ENCODE measurements at regions of chr19 and their contacts with region 1.

Region 1: DNA sequence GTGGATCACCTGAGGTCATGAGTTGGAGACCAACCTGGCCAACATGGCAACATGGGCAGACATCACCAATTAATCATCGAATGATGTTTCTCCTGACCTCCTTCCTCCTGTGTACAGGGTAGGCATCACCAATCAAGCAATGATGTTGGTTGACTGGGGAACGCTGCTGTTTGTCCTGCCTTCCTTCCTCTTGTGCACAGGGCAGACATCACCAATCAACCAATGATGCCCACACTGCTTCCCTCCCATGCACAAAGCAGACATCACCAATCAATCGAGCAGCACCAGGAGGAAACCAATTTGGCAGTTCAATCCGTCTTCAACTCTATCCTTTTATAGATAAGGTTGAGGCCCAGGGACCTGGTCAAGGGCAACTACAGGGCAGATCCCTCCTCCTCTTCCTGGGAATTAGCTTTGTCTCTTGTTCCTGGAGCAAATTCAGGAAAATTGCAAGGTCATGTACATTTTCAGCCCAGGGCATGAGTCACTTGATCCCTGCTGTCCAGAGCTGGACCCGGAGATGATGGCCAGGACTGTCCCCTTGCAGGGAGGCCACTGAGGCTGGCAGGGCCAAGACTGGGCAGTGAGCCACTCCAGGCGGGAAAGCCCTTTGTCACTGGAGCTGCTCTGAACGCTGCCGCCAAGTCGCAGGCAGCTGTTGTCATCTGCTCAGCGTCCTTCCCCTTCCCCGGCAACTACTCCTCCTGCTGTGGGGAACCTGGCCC is 5.3 kb upstream of the CSNK1G2 start:
- DNase-seq: peak; percentile 24
- H3K4me3 ChIP-seq: no peak overlapping the region
- H3K27ac ChIP-seq: no peak overlapping the region
- H3K4me1 ChIP-seq: peaks cover 10% of the 10 kb centered on the region
- H3K27me3 ChIP-seq: no peaks in the 10 kb centered on the region
- CTCF ChIP-seq: no peak

Region 2: GRCh38 chr19:1896508-1896907 is 39.1 kb before region 1 on chr19:
- CTCF ChIA-PET with region 1: no interaction called
- dilution Hi-C with region 1: loop called (anchors 5 kb)
- in situ Hi-C with region 1: no loop called
- intact Hi-C with region 1: no loop called
- DNase-seq: no peak
- H3K4me3 ChIP-seq: no peak overlapping the region
- H3K27ac ChIP-seq: no peak overlapping the region
- H3K4me1 ChIP-seq: peaks cover 7% of the 10 kb centered on the region
- H3K27me3 ChIP-seq: no peaks in the 10 kb centered on the region
- CTCF ChIP-seq: no peak

Region 3: DNA sequence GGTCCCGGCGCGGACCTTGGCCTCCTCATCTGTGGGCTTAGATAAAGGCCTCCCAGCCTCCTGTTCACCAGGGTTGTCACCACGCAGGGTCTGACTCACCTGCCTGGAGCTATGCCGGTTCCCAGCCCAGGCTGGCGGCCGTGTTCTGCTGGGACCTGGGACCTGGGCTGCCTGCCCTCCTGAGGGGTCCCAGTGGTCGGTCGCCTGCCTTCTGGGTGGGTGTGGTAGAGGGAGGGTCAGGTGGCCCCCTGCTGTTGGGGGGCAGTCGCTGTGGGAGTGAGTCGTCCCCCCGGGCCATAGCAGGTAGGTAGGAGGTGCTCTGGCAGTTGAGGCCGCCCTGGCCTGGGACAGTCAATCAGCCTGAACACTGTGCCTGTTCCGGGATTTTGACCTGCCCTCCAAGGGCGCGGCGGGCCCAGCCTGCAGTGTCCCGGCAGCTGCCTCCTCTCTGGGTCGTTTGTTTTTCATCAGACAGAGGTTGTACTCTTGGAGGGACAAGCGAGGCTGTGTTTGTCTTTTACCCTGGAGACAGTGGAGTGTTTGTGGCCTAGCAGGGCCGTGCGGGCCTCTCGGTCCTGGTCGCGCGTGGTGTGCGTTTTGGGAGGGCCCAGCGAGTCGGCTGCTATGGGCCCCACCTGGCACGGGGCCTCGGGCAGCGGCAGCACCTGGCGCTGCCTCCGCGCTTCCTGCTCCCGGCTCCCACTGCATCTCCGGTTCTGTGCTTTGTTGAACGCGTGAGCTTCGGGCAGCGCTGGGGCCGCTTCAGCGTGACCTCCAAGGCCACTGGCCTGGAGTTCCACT is 27.9 kb before region 1 on chr19:
- CTCF ChIA-PET with region 1: no interaction called
- dilution Hi-C with region 1: no loop called
- in situ Hi-C with region 1: no loop called
- intact Hi-C with region 1: no loop called
- DNase-seq: peak; percentile 49
- H3K4me3 ChIP-seq: peak overlapping the region in 2 of 3 experiments; percentile 27 to 40
- H3K27ac ChIP-seq: no peak overlapping the region
- H3K4me1 ChIP-seq: peaks cover 40% of the 10 kb centered on the region
- H3K27me3 ChIP-seq: no peaks in the 10 kb centered on the region
- CTCF ChIP-seq: no peak

Region 4: GRCh38 chr19:1975162-1975480 is 39.5 kb after region 1 on chr19:
- CTCF ChIA-PET with region 1: no interaction called
- dilution Hi-C with region 1: no loop called
- in situ Hi-C with region 1: no loop called
- intact Hi-C with region 1: no loop called
- DNase-seq: no peak
- H3K4me3 ChIP-seq: no peak overlapping the region
- H3K27ac ChIP-seq: no peak overlapping the region
- H3K4me1 ChIP-seq: peaks cover 12% of the 10 kb centered on the region
- H3K27me3 ChIP-seq: no peaks in the 10 kb centered on the region
- CTCF ChIP-seq: no peak

Region 5: GRCh38 chr19:2083174-2083854 is 147.7 kb after region 1 on chr19:
- CTCF ChIA-PET with region 1: no interaction called
- dilution Hi-C with region 1: no loop called
- in situ Hi-C with region 1: no loop called
- intact Hi-C with region 1: no loop called
- DNase-seq: no peak
- H3K4me3 ChIP-seq: no peak overlapping the region
- H3K27ac ChIP-seq: no peak overlapping the region
- H3K4me1 ChIP-seq: peaks cover 46% of the 10 kb centered on the region
- H3K27me3 ChIP-seq: no peaks in the 10 kb centered on the region
- CTCF ChIP-seq: no peak

Region 6: GRCh38 chr19:2117215-2117960 is 181.7 kb after region 1 on chr19:
- CTCF ChIA-PET with region 1: no interaction called
- dilution Hi-C with region 1: loop called (anchors 5 kb)
- in situ Hi-C with region 1: no loop called
- intact Hi-C with region 1: no loop called
- DNase-seq: no peak
- H3K4me3 ChIP-seq: no peak overlapping the region
- H3K27ac ChIP-seq: no peak overlapping the region
- H3K4me1 ChIP-seq: peaks cover 18% of the 10 kb centered on the region
- H3K27me3 ChIP-seq: no peaks in the 10 kb centered on the region
- CTCF ChIP-seq: no peak

Region 7: DNA sequence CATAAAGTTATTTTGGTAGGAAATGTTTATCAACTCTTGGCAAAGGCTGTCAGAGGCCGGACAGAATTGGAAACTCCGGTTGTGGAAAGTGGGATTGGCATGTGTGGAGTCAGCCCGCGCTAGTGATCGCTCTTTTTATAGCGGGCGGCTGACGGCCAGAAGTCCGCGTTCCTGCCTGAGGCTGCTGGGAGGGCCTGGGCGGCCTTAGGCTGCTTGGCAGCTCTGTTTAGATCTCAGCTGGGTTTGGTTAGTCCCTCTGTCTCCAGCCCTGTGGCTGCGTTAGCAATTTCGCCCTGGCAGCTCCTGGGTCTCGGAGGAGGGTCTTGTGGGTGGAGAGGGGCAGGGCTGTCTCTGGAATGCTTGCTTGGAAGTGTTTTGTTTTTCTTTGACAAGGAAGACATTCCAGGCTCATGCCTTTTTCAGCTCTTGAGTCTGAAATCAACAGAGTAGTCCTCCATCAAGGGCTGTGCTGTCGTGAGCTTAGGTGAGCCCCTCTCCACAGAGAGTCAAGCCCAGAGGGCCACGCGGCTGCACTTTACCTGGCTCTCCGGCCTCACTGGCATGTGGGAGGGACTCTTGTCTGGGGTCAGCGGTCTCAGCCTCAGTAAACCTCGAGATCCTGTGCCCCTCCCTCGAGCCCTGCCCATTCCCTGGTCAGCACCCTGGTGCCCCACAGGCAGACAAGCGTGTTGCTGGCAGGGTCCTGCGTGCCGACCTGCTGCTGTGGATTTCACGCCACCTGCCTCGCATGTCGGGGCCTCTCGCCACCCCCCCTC is 250.6 kb after region 1 on chr19:
- CTCF ChIA-PET with region 1: no interaction called
- dilution Hi-C with region 1: loop called (anchors 5 kb)
- in situ Hi-C with region 1: no loop called
- intact Hi-C with region 1: no loop called
- DNase-seq: no peak
- H3K4me3 ChIP-seq: no peak overlapping the region
- H3K27ac ChIP-seq: no peak overlapping the region
- H3K4me1 ChIP-seq: peaks cover 4% of the 10 kb centered on the region
- H3K27me3 ChIP-seq: no peaks in the 10 kb centered on the region
- CTCF ChIP-seq: no peak

Measured in mammary epithelial cell (primary cell).